T-cell (primary cell): ENCODE measurements at regions of chr4 and their contacts with region 1.

Region 1: GRCh38 chr4:122364700-122365404 is 14.0 kb upstream of the ADAD1 start:
- DNase-seq: peak in 18 of 35 experiments; percentile 0 to 33 (median 6)
- ATAC-seq: peak in 3 of 4 experiments; percentile 63 to 84 (median 80)
- H3K4me3 ChIP-seq: no peak overlapping the region
- H3K4me3 Mint-ChIP-seq: no peak overlapping the region
- H3K27ac ChIP-seq: no peak overlapping the region
- H3K27ac Mint-ChIP-seq: no peak overlapping the region
- H3K4me1 ChIP-seq: peaks cover 0 to 11% of the 10 kb centered on the region in 2 experiments
- H3K4me1 Mint-ChIP-seq: peaks cover 0 to 8% (median 0%) of the 10 kb centered on the region in 3 donors
- H3K27me3 ChIP-seq: no peaks in the 10 kb centered on the region
- H3K27me3 Mint-ChIP-seq: no peaks in the 10 kb centered on the region

Region 2: DNA sequence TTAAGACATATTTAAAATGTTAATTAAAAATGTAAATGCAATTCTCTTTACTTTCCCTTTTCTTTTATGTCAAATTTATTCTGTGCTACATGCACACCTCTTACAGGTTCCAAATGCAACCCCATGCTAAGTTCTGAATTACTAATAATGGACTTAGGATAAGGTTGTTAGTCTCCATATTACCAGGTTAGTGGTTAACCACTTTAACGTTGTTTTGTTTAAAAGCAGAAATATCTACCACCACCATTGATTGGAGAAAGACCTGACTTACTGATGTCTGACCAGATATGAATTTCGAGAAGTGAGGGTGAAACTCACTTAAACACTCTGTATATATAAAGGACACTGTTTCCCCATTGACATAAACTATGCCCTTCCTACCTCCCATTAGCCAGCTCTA is 406.1 kb before region 1 on chr4:
- CTCF ChIA-PET with region 1: no interaction called
- POLR2A ChIA-PET with region 1: interaction called in 1 of 2 experiments, 10 read pairs
- DNase-seq: no peak
- ATAC-seq: no peak
- H3K4me3 ChIP-seq: no peak overlapping the region
- H3K4me3 Mint-ChIP-seq: no peak overlapping the region
- H3K27ac ChIP-seq: no peak overlapping the region
- H3K27ac Mint-ChIP-seq: no peak overlapping the region
- H3K4me1 ChIP-seq: no peaks in the 10 kb centered on the region
- H3K4me1 Mint-ChIP-seq: peaks cover 0 to 4% (median 0%) of the 10 kb centered on the region in 3 donors
- H3K27me3 ChIP-seq: no peaks in the 10 kb centered on the region
- H3K27me3 Mint-ChIP-seq: peaks cover 4 to 13% of the 10 kb centered on the region in 2 donors